Activated naive CD4-positive, alpha-beta T cell treated with anti-CD3 and anti-CD28 coated beads, Interleukin-2, amount 10 ng/mL, durations not matched to agents 7 days and 5 days (primary cell): ENCODE measurements at regions of chr2 and their contacts with region 1.

Region 1: DNA sequence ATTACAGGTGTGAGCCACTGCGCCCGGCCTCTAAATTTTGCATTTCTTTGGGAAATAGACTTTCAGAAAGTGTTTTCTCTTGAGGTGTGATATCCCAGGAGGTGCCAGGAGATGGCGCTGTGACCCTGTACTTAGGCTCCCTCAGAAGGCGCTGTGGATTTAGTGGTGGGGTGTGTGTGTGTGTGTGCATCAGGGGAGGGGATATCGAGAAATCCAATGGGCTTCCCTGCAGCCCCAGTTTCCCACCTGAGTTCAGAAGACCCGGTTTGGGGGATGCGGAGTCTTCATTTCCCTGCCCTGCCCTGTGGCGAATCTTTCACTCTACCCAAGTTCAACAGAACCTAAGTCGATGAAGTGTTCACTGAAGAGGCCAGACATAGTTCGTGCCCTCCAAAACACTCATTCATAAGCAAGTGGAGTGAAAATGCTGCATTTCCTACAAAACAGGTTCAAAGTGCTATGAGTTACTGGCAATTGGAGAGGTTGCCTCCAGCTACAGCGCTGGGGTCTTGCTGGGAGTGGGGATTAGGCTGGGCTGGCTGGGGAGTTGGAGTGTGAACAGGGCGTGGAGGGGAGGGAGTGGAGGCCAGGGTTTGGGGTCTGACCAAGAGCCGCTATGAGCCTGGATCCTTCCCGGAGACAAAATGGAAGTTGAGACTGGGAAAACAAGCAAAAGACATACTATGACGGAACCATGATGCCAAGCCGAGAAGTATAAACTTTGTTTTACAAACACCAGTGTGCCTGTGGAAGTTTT is 6.5 kb upstream of the WNT6 start:
- DNase-seq: peak; percentile 72
- H3K4me3 Mint-ChIP-seq: no peak overlapping the region
- H3K27ac Mint-ChIP-seq: no peak overlapping the region
- H3K4me1 Mint-ChIP-seq: no peaks in the 10 kb centered on the region
- H3K27me3 Mint-ChIP-seq: peaks cover 83% of the 10 kb centered on the region

Region 2: DNA sequence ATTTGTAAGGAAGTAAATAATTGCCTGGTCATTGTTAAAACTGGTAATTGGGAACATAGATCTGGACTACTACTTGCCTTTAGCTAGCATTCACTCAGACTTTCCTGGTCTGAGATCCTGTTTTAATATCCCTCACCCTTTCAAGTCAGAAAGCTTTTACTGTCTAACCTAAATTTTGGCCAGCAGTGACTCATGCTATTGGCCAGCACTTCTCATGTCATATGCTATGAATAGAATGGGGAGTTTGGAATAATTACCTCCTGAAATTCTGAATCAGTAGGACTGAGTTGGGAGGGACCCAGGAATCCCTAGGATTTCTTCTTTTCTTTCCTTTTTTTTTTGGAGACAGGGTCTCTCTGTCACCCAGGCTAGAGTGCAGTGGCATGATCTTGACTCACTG is 161.9 kb before region 1 on chr2:
- CTCF ChIA-PET with region 1: interaction called, 10 read pairs
- DNase-seq: no peak
- H3K4me3 Mint-ChIP-seq: no peak overlapping the region
- H3K27ac Mint-ChIP-seq: no peak overlapping the region
- H3K4me1 Mint-ChIP-seq: peaks cover 3% of the 10 kb centered on the region
- H3K27me3 Mint-ChIP-seq: no peaks in the 10 kb centered on the region

Region 3: DNA sequence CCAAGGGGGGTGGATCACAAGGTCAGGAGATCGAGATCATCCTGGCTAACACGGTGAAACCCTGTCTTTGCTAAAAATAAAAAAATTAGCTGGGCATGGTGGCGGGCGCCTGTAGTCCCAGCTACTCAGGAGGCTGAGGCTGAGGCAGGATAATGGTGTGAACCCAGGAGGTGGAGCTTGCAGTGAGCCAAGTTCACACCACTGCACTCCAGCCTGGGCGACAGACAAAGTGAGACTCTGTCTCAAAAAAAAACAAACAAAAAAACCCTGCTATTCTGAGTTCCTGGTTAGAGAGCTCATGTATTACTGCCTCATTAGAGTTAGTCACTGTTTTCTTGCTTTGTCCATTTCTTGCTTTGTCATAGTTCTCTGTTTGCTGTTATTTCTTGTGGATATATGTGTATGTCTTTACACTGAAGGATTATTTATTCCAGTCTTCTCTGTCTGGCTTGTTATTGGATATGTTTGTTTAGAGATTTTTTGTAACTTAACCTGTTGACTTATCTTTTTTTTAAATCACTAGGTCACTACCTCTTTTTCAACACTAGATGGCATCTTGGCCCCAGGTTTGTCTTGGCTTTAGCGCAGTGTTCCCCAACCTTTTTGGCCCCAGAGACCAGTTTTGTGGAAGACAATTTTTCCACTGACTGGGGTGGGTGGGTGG is 125.5 kb before region 1 on chr2:
- CTCF ChIA-PET with region 1: interaction called, 89 read pairs
- DNase-seq: no peak
- H3K4me3 Mint-ChIP-seq: no peak overlapping the region
- H3K27ac Mint-ChIP-seq: no peak overlapping the region
- H3K4me1 Mint-ChIP-seq: no peaks in the 10 kb centered on the region
- H3K27me3 Mint-ChIP-seq: no peaks in the 10 kb centered on the region